Activated CD4-positive, alpha-beta T cell treated with anti-CD3 and anti-CD28 coated beads for 36 hours (primary cell): ENCODE measurements at regions of chr10 and their contacts with region 1.

Region 1: DNA sequence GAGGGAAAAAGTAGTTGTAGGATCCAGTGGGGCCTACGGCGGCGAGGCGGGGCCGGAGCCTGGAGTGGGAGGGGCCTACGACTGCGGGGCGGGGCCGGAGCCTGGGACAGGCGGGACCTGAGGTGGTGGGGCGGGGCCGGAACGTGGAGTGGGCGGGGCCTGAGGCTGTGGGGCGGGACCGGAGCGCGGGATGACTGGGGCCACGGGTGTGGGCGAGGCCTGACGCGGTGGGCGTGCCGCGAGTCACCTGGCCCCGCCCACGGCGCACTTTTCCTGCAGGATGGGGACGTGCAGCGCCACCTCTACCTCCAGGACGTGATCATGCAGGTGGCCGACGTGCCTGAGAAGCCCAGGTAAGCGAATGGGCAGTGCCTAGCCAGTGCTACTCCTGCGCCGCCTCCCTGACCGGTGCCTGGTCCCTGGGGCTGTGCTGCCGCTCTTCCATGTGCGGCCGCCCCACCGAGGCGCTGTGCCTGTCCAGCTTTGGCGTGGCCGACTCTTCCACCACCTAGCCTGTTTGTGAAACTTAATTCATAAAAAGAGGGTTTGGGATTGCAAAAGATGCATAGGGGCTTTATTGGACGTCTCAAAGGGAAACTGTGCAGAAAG is 501 bp downstream of the ZNF511 start:
- DNase-seq: peak; percentile 97
- ATAC-seq: peak; percentile 84
- H3K4me3 Mint-ChIP-seq: peak overlapping the region; percentile 100
- H3K27ac Mint-ChIP-seq: peak overlapping the region; percentile 69
- H3K4me1 Mint-ChIP-seq: peaks cover 30% of the 10 kb centered on the region
- H3K27me3 Mint-ChIP-seq: no peaks in the 10 kb centered on the region

Region 2: DNA sequence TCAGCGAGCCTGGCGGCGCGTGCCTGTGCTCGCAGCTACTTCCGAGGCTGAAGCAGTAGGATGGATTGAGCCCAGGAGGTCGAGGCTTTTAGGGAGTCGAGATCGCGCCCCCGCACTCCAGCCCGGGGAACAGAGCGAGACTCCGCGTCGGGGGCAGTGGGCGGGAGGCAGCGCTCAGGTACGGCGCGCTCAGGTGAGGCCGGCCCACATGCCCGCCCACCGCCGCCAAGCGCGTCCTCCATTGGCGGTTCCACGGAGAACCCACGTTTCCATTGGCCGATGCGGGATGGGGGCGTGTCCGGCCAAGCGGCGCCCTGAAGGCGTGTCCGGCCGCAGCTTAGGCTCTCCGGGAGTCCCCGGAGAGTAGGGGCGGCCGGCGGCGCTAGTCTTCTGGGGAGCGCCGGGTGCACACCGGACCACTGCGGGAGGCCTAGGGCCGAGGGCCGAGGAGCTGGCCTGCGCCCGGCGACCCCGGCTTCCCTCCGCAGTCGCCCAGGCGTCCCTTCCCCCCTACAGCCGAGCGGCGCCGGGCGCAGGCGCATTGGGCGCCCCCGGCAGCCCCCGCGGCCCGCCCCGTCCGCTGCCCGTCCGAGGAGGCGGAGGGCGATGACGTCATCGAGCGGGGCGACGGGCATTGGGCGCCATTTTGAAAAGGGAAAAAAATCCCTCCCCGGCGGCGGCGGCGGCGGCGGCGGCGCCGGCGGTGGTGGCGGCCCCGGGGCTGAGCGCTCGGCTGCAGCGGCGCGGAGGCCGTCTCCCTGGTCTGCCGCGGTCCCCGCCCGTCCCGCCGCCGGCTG is 1408.7 kb before region 1 on chr10 and contains the start of gene PPP2R2D:
- CTCF ChIA-PET with region 1: no interaction called
- POLR2A ChIA-PET with region 1: no interaction called
- intact Hi-C with region 1: loop called in 1 of 2 experiments (anchors 2 kb)
- DNase-seq: peak; percentile 97
- ATAC-seq: peak; percentile 83
- H3K4me3 Mint-ChIP-seq: peak within 1 kb of the TSS; percentile 93
- H3K27ac Mint-ChIP-seq: peak within 1 kb of the TSS; percentile 92
- H3K4me1 Mint-ChIP-seq: peaks cover 53% of the 10 kb centered on the region
- H3K27me3 Mint-ChIP-seq: peaks cover 7% of the 10 kb centered on the region
- total RNA-seq, gene PPP2R2D: 30.0 to 39.3 TPM

Region 3: GRCh38 chr10:132836832-132837540 is 472.2 kb before region 1 on chr10:
- CTCF ChIA-PET with region 1: no interaction called
- POLR2A ChIA-PET with region 1: no interaction called
- intact Hi-C with region 1: loop called in 1 of 2 experiments (anchors 5 kb)
- DNase-seq: peak; percentile 68
- ATAC-seq: peak; percentile 60
- H3K4me3 Mint-ChIP-seq: no peak overlapping the region
- H3K27ac Mint-ChIP-seq: no peak overlapping the region
- H3K4me1 Mint-ChIP-seq: no peaks in the 10 kb centered on the region
- H3K27me3 Mint-ChIP-seq: peaks cover 2% of the 10 kb centered on the region

Region 4: DNA sequence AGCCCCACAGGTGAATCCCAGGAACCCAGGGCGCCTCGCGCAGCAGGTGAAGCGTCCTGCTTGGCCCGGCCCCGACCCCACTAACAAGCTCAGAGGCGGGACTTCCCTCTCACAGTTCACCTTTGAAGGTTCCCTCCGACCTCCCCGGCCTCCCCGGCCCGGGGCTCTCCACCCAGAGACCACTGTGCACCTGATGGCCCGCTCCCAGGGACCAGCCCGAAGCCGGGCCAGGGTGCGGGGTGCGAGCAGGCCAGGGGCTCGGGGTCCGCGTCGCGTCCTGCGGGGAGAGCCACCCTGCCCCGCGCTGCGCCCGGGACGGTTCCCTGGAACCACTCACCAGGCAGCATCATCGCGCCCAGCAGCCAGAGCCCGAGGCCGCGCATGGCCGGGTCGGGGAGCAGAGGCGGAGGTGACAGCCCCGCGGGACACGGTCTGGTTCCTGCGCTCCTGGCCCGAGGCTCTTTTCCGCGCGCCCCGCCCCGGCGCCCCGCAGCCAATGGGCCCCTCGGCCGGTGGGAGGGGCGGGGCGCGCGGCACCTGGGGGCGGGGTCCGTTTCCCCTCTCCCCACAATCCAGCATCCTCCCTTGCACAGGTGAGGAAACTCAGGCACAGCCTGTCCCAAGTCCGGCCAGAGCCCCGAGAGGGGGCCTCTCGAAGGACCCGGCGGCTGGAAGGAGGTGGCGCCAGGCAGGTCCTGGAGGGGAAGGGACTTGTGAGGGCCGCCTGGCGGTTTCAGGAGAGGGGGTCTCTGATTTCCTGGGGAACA is 32.6 kb before region 1 on chr10 and contains the start of gene ADAM8:
- CTCF ChIA-PET with region 1: interaction called, 9 read pairs
- POLR2A ChIA-PET with region 1: no interaction called
- intact Hi-C with region 1: loop called (anchors 1 kb)
- DNase-seq: peak; percentile 86
- ATAC-seq: peak; percentile 55
- H3K4me3 Mint-ChIP-seq: peak within 1 kb of the TSS; percentile 92
- H3K27ac Mint-ChIP-seq: peak within 1 kb of the TSS; percentile 90
- H3K4me1 Mint-ChIP-seq: peaks cover 19% of the 10 kb centered on the region
- H3K27me3 Mint-ChIP-seq: no peaks in the 10 kb centered on the region
- total RNA-seq, gene ADAM8: 124 to 176 TPM

Region 5: DNA sequence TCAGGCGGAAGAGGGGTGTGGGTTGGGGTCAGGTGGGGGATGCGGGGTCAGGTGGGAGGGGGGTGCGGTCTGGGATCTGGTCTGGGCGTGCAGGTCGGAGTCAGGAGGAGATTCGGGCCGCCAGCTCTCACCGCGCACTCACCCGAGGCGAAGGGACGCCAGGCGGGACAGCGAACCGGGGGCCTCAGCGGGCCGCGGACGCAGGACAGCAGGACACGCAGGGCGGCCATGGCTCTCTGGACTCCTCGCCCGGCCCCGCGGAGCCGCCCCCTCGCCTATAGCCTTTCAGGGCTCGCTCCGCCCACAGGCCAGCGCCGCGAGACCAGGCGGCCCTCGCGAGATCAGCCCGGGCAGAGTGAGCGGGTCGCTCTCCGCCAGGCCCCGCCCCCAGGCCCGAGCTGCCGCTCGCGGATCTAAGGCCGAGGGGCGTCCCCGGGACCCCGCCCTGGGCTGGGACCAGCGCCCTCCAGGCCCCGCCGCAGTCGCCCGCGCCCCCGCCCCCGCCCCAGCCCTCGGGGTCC is 63.9 kb after region 1 on chr10 and contains the start of gene ECHS1:
- CTCF ChIA-PET with region 1: no interaction called
- POLR2A ChIA-PET with region 1: no interaction called
- intact Hi-C with region 1: loop called in 1 of 2 experiments (anchors 1 kb)
- DNase-seq: peak; percentile 97
- ATAC-seq: peak; percentile 100
- H3K4me3 Mint-ChIP-seq: peak within 1 kb of the TSS; percentile 73
- H3K27ac Mint-ChIP-seq: peak within 1 kb of the TSS; percentile 79
- H3K4me1 Mint-ChIP-seq: peaks cover 11% of the 10 kb centered on the region
- H3K27me3 Mint-ChIP-seq: no peaks in the 10 kb centered on the region
- total RNA-seq, gene ECHS1: 42.0 to 56.7 TPM

Region 6: DNA sequence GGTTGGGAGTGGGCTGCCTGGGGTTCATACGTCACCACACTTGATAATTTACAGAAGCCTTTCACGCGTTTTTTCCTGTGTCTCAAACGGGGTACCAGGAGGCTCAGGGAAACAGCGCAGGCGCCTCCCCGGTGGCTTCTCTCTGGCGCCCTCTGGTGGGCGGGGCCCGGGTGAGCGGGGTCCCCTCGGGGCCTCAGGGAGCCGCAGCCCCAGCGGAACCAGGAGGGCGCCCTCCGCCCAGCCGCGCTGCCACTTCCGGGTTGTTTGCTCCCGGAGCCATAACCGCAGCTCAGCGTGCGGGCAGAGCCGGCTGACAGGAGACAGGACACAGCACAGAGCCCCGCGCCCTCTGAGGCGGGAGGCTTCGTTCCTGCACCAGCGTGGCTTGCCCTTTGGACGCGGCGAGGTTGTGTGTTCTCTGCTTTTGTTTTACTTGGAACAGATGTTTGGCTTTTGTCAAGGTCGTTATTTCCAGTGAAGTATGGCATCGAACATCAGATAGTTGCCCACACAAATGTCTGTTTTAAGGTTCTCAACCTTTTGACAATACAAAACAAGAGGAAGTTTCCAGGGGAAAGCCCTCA is 211.0 kb after region 1 on chr10:
- CTCF ChIA-PET with region 1: no interaction called
- POLR2A ChIA-PET with region 1: no interaction called
- intact Hi-C with region 1: loop called in 1 of 2 experiments (anchors 1 kb)
- DNase-seq: peak; percentile 96
- ATAC-seq: peak; percentile 99
- H3K4me3 Mint-ChIP-seq: peak overlapping the region; percentile 66
- H3K27ac Mint-ChIP-seq: peak overlapping the region; percentile 11
- H3K4me1 Mint-ChIP-seq: peaks cover 10% of the 10 kb centered on the region
- H3K27me3 Mint-ChIP-seq: peaks cover 5% of the 10 kb centered on the region